Activated CD4-positive, alpha-beta T cell treated with anti-CD3 and anti-CD28 coated beads for 36 hours (primary cell): ENCODE measurements at regions of chr1 and their contacts with region 1.

Region 1: GRCh38 chr1:201877877-201878401 is 10.8 kb upstream of the SHISA4 start:
- DNase-seq: peak; percentile 44
- ATAC-seq: peak; percentile 77
- H3K4me3 Mint-ChIP-seq: no peak overlapping the region
- H3K27ac Mint-ChIP-seq: no peak overlapping the region
- H3K4me1 Mint-ChIP-seq: no peaks in the 10 kb centered on the region
- H3K27me3 Mint-ChIP-seq: no peaks in the 10 kb centered on the region

Region 2: GRCh38 chr1:201696217-201696761 is 181.7 kb before region 1 on chr1:
- CTCF ChIA-PET with region 1: no interaction called
- POLR2A ChIA-PET with region 1: no interaction called
- intact Hi-C with region 1: no loop called
- DNase-seq: no peak
- ATAC-seq: no peak
- H3K4me3 Mint-ChIP-seq: no peak overlapping the region
- H3K27ac Mint-ChIP-seq: no peak overlapping the region
- H3K4me1 Mint-ChIP-seq: no peaks in the 10 kb centered on the region
- H3K27me3 Mint-ChIP-seq: no peaks in the 10 kb centered on the region

Region 3: DNA sequence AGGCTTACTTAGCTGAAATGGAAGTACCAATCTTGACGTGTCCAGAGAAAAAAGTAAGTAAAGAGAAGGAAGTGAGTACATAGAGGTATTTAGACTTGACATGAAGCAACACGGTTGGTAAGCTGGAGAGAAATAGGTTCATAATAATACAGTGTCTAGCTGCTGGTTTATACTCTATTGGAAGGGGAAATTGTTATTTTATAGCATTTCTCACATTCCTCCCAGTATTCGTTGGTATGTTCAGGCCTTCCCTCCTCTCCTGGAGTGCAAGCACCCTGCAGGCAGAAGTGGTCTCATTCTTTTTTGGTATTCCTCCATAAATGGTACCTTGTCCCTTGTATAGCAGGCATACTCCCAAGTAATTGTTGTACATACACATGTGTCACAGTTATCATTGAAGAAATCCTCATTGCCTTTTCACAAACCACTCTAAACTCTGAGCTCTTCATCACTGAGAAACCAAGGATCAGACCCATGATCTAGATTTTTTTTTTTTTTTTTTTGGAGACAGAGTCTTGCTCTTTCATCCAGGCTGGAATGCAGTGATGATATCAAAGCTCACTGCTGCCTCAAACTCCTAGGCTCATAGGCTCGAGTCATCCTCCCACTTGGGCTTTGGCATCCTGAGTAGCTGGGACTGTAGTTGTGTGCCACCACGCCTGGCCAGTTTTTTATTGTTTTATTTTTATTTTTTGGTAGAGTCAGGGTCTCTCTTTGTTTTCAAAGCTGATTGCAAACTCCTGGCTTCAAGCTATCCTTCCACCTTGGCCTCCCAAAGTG is 58.8 kb before region 1 on chr1:
- CTCF ChIA-PET with region 1: no interaction called
- POLR2A ChIA-PET with region 1: interaction called, 10 read pairs
- intact Hi-C with region 1: no loop called
- DNase-seq: no peak
- ATAC-seq: no peak
- H3K4me3 Mint-ChIP-seq: no peak overlapping the region
- H3K27ac Mint-ChIP-seq: no peak overlapping the region
- H3K4me1 Mint-ChIP-seq: no peaks in the 10 kb centered on the region
- H3K27me3 Mint-ChIP-seq: no peaks in the 10 kb centered on the region

Region 4: DNA sequence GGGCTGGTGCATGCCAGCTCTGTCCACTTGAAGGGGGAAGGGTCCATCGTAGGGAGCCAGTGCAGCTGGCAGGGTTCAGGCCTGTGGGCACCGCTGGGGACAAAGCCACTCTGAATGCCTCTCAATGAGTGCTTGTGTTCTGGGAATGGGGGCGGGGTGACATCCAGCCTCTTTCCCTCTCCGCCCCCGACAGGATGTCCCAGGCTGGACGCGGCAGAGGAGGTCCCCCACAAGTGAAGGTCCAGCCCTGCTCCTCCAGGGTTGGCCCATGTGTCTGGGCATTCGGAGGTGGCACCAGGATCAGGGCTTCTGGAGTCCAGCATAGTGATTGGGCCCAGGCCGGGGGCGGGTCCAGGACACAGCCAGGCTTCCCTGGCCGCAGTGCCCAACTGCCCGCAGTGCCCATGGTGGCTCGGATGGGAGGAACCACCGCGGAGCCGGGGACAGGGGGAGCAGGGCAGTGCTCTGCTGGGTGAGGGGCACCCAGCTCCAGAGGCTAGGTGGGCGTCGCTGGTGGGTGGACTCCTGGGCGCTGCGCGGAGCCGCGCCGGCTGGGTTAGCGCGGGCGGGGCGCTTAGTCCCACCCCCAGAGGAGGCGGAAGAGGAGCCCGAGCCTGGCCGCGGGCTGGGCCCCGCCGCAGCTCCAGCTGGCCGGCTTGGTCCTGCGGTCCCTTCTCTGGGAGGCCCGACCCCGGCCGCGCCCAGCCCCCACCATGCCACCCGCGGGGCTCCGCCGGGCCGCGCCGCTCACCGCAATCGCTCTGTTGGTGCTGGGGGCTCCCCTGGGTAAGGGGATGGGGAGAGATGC is 10.5 kb after region 1 on chr1 and contains the start of gene SHISA4:
- CTCF ChIA-PET with region 1: interaction called, 12 read pairs
- POLR2A ChIA-PET with region 1: no interaction called
- intact Hi-C with region 1: no loop called
- DNase-seq: peak; percentile 23
- ATAC-seq: peak; percentile 66
- H3K4me3 Mint-ChIP-seq: peak within 1 kb of the TSS; percentile 15
- H3K27ac Mint-ChIP-seq: no peak within 1 kb of the TSS
- H3K4me1 Mint-ChIP-seq: peaks cover 4% of the 10 kb centered on the region
- H3K27me3 Mint-ChIP-seq: peaks cover 35% of the 10 kb centered on the region
- total RNA-seq, gene SHISA4: 0.14 to 0.26 TPM

Region 5: GRCh38 chr1:201970334-201971159 is 92.6 kb after region 1 on chr1:
- CTCF ChIA-PET with region 1: interaction called, 5 read pairs
- POLR2A ChIA-PET with region 1: interaction called, 3 read pairs
- intact Hi-C with region 1: loop called in 1 of 2 experiments (anchors 5 kb)
- DNase-seq: no peak
- ATAC-seq: no peak
- H3K4me3 Mint-ChIP-seq: no peak overlapping the region
- H3K27ac Mint-ChIP-seq: no peak overlapping the region
- H3K4me1 Mint-ChIP-seq: no peaks in the 10 kb centered on the region
- H3K27me3 Mint-ChIP-seq: no peaks in the 10 kb centered on the region

Region 6: DNA sequence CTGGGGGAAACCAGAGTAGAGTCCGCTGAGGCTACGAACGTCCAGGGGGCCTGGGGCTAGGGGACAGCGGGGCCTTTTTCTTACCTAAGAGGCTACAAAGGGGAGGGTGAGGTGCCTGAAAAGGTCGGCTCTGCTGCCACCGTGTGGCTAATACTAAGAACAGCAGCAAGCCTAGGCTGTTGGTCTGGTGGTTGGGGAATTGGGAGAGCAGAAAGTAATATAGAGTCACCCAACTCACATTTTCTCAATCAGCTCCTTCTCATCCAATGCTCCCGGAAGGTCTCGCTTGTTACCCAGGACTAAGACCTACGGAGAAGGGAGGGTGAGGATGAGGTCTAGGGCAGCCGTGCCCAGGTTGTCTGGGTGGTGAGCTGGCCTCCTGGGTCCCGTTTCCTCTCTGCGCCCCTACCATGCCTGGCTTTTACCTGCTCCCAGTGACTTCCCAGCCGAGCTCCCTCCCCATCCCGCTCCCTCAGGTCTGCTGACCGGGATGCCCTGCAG is 257.3 kb after region 1 on chr1:
- CTCF ChIA-PET with region 1: no interaction called
- POLR2A ChIA-PET with region 1: no interaction called
- intact Hi-C with region 1: no loop called
- DNase-seq: peak; percentile 70
- ATAC-seq: peak; percentile 87
- H3K4me3 Mint-ChIP-seq: no peak overlapping the region
- H3K27ac Mint-ChIP-seq: no peak overlapping the region
- H3K4me1 Mint-ChIP-seq: no peaks in the 10 kb centered on the region
- H3K27me3 Mint-ChIP-seq: no peaks in the 10 kb centered on the region